ENCODE measurements at regions of chr2 and their contacts with region 1.

Region 1: DNA sequence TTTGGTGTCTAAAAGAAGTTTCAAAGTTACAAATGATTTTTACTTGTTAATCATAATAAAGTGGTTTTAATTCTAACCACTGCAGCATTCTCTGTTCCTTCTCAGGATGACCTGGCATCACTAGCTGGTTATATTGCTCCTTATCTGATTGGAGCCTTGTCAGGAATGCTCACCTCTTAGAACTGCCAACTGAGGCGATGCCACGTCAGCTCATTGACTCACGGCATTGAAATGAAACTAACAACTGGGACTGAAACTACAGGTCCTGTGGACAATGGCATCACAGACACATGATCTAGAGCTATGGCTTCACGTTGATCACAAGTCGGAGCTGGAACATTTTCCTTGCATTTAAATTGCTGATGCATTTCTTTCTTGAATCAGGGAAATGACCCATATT is 54.9 kb upstream of the MAP2 start:
- DNase-seq: peak; percentile 100
- H3K4me3 ChIP-seq: peak overlapping the region in 1 of 3 experiments; percentile 21
- H3K27ac ChIP-seq: peak overlapping the region; percentile 97
- H3K4me1 ChIP-seq: peaks cover 35% of the 10 kb centered on the region
- H3K27me3 ChIP-seq: no peaks in the 10 kb centered on the region
- CTCF ChIP-seq: no peak

Region 2: GRCh38 chr2:209441541-209441940 is 72.6 kb after region 1 on chr2:
- CTCF ChIA-PET with region 1: no interaction called
- dilution Hi-C with region 1: no loop called
- in situ Hi-C with region 1: no loop called
- intact Hi-C with region 1: no loop called
- DNase-seq: no peak
- H3K4me3 ChIP-seq: no peak overlapping the region
- H3K27ac ChIP-seq: no peak overlapping the region
- H3K4me1 ChIP-seq: no peaks in the 10 kb centered on the region
- H3K27me3 ChIP-seq: no peaks in the 10 kb centered on the region
- CTCF ChIP-seq: no peak

Region 3: DNA sequence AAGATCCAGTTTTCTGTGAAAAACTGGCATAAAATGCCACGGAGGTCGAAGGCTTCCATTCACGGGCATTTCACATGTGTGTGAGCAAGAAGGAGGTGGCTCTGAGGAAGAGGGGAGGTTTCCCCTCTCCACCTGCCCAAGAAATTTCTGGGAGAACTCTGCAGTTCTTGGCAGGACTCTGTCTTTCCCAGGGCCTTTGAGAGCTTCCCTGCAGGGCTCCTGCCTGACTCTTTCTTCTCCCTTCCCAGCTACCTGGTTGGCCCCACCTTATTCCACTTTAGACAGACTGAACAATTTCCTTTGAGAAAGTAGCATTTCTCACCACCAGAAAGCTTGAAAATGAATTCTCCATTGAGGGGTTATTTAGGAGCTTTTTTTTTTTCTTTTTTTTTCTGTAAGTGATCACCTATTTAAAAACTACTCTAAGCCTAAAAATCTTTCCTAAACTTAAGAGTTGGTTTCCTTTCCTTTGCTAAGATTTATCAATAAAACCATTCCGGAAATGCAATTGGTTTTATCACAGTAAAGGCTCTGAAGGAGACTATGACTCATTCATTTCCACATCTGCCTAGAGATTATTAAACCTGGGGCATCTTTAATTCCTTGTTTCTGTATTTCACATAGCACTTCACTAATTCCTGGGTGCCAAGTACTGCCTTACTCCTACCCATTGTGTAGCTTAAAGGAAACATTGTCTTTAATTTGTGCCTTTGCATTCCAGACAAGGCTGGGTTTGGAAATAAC is 462.0 kb after region 1 on chr2:
- CTCF ChIA-PET with region 1: no interaction called
- dilution Hi-C with region 1: no loop called
- in situ Hi-C with region 1: no loop called
- intact Hi-C with region 1: no loop called
- DNase-seq: no peak
- H3K4me3 ChIP-seq: no peak overlapping the region
- H3K27ac ChIP-seq: no peak overlapping the region
- H3K4me1 ChIP-seq: no peaks in the 10 kb centered on the region
- H3K27me3 ChIP-seq: no peaks in the 10 kb centered on the region
- CTCF ChIP-seq: no peak

Region 4: GRCh38 chr2:211132586-211132985 is 1763.7 kb after region 1 on chr2:
- CTCF ChIA-PET with region 1: no interaction called
- dilution Hi-C with region 1: no loop called
- in situ Hi-C with region 1: no loop called
- intact Hi-C with region 1: loop called (anchors 10 kb)
- DNase-seq: peak; percentile 20
- H3K4me3 ChIP-seq: no peak overlapping the region
- H3K27ac ChIP-seq: no peak overlapping the region
- H3K4me1 ChIP-seq: peaks cover 20% of the 10 kb centered on the region
- H3K27me3 ChIP-seq: no peaks in the 10 kb centered on the region
- CTCF ChIP-seq: no peak

Measured in mammary epithelial cell (primary cell).